Right ventricle myocardium superior (tissue), 1 donor: ENCODE measurements at regions of chr3 and their contacts with region 1.

Region 1: GRCh38 chr3:132519914-132520313 is 77.2 kb upstream of the ACKR4 start:
- DNase-seq: no peak
- ATAC-seq: no peak

Region 2: GRCh38 chr3:132222868-132223538 is 296.9 kb before region 1 on chr3:
- intact Hi-C with region 1: no loop called
- DNase-seq: no peak
- ATAC-seq: no peak

Region 3: GRCh38 chr3:132416807-132417694 is 102.9 kb before region 1 on chr3 and contains the start of gene DNAJC13:
- intact Hi-C with region 1: no loop called
- DNase-seq: peak; percentile 96
- ATAC-seq: peak; percentile 99
- total RNA-seq, gene DNAJC13: 25.7 TPM

Region 4: GRCh38 chr3:132464066-132464465 is 55.8 kb before region 1 on chr3:
- intact Hi-C with region 1: loop called (anchors 10 kb)
- DNase-seq: no peak
- ATAC-seq: no peak